Ascending aorta (tissue), 2 donors: ENCODE measurements at regions of chr6 and their contacts with region 1.

Region 1: GRCh38 chr6:16494793-16495192 is 256.4 kb downstream of the GMPR start:
- DNase-seq: no peak
- H3K4me3 ChIP-seq: no peak overlapping the region
- H3K27ac ChIP-seq: no peak overlapping the region
- H3K4me1 ChIP-seq: peaks cover 0 to 10% of the 10 kb centered on the region in 2 donors
- H3K27me3 ChIP-seq: no peaks in the 10 kb centered on the region
- CTCF ChIP-seq: no peak

Region 2: GRCh38 chr6:16438718-16439591 is 55.8 kb before region 1 on chr6:
- intact Hi-C with region 1: no loop called
- DNase-seq: no peak
- H3K4me3 ChIP-seq: no peak overlapping the region
- H3K27ac ChIP-seq: peak overlapping the region; percentile 58 to 70
- H3K4me1 ChIP-seq: peaks cover 2 to 39% of the 10 kb centered on the region in 2 donors
- H3K27me3 ChIP-seq: no peaks in the 10 kb centered on the region
- CTCF ChIP-seq: no peak

Region 3: DNA sequence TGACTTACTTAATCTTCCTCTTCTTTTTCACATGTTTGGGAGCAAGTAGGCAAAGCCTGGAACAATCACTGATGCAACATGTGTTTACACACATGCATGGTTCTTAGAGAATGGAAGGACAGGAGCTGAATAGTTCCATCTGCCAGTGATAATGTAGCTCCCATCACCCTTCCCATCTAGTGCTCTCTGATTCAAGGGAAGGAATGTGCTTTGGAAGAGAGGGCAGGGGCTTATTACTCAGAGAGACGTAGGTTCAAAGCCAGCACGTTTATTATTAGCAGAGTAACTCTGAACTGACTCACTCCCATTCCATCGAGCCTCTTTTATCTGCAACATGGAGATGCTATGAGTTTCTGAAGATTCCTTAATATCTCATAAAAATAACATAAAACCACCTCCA is 44.5 kb before region 1 on chr6:
- intact Hi-C with region 1: loop called (anchors 5 kb)
- DNase-seq: no peak
- H3K4me3 ChIP-seq: no peak overlapping the region
- H3K27ac ChIP-seq: no peak overlapping the region
- H3K4me1 ChIP-seq: no peaks in the 10 kb centered on the region
- H3K27me3 ChIP-seq: no peaks in the 10 kb centered on the region
- CTCF ChIP-seq: no peak